Sigmoid colon (tissue), 7 donors: ENCODE measurements at regions of chr5 and their contacts with region 1.

Region 1: GRCh38 chr5:154610321-154611154 is 132.5 kb upstream of the HAND1 start:
- DNase-seq: peak; percentile 91
- H3K4me3 ChIP-seq: peak overlapping the region; percentile 15 to 49 (median 43)
- H3K27ac ChIP-seq: no peak overlapping the region
- H3K4me1 ChIP-seq: peaks cover 0 to 39% (median 29%) of the 10 kb centered on the region in 4 donors
- H3K27me3 ChIP-seq: peaks cover 0 to 21% (median 0%) of the 10 kb centered on the region in 3 donors
- CTCF ChIP-seq: peak; percentile 88 to 93 (median 93)
- EP300 ChIP-seq: no peak
- POLR2A ChIP-seq: no peak

Region 2: GRCh38 chr5:154520861-154521453 is 89.6 kb before region 1 on chr5:
- intact Hi-C with region 1: loop called (anchors 2 kb)
- DNase-seq: no peak
- H3K4me3 ChIP-seq: no peak overlapping the region
- H3K27ac ChIP-seq: no peak overlapping the region
- H3K4me1 ChIP-seq: peaks cover 0 to 55% (median 33%) of the 10 kb centered on the region in 4 donors
- H3K27me3 ChIP-seq: no peaks in the 10 kb centered on the region
- CTCF ChIP-seq: peak; percentile 30 to 79 (median 62)
- EP300 ChIP-seq: no peak
- POLR2A ChIP-seq: no peak

Region 3: DNA sequence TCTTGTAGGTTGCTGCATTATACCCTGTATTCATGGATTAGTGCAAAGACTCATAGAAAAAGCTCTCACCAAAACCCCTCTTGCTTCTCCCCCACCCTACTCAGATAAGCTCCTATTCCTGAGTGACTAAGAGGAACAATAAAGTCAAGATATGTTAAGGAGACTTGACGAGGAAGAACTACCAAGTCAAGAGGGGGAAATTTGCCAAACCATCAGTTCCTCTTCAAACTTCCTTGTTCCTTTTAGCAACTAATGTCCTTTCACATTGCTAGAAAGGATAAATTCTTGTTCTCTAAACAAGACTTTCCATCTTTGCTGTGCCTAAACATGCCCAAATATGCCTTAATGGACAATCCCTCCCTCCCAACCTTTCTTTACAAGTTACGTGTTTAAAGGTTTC is 274.9 kb after region 1 on chr5:
- intact Hi-C with region 1: no loop called
- DNase-seq: no peak
- H3K4me3 ChIP-seq: no peak overlapping the region
- H3K27ac ChIP-seq: no peak overlapping the region
- H3K4me1 ChIP-seq: no peaks in the 10 kb centered on the region
- H3K27me3 ChIP-seq: no peaks in the 10 kb centered on the region
- CTCF ChIP-seq: no peak
- EP300 ChIP-seq: no peak
- POLR2A ChIP-seq: no peak